CD8-positive, alpha-beta T cell (primary cell): ENCODE measurements at regions of chr3 and their contacts with region 1.

Region 1: GRCh38 chr3:105686278-105686897 is 182.4 kb downstream of the CBLB start:
- DNase-seq: peak in 2 of 9 experiments; percentile 43 to 63
- ATAC-seq: peak; percentile 66
- H3K4me3 ChIP-seq: no peak overlapping the region
- H3K4me3 Mint-ChIP-seq: no peak overlapping the region
- H3K27ac ChIP-seq: peak overlapping the region in 1 of 2 experiments; percentile 42
- H3K27ac Mint-ChIP-seq: peak overlapping the region; percentile 60
- H3K4me1 ChIP-seq: peaks cover 21% of the 10 kb centered on the region
- H3K4me1 Mint-ChIP-seq: peaks cover 28% of the 10 kb centered on the region
- H3K27me3 ChIP-seq: no peaks in the 10 kb centered on the region
- H3K27me3 Mint-ChIP-seq: no peaks in the 10 kb centered on the region
- CTCF ChIP-seq: peak; percentile 98

Region 2: DNA sequence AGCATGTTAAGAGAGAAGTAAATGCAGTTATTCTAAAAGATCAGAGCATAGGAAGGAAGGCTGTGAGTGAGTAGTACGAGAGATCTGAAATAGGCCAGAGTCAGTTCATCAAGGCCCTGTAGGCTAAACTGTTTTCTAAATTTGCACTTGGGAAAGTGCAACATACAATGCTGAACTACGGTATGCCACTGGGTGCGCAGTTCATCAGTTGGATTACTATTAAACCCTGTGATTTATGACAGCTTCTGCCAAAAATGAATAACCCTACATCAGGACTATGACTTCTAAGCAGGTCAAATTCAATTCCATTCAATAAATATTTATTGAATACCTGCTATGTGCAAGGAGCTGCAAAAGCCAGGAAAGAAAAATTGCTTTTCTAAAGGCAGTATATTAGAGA is 171.6 kb after region 1 on chr3:
- CTCF ChIA-PET with region 1: no interaction called
- POLR2A ChIA-PET with region 1: no interaction called
- intact Hi-C with region 1: no loop called
- DNase-seq: no peak
- ATAC-seq: no peak
- H3K4me3 ChIP-seq: no peak overlapping the region
- H3K4me3 Mint-ChIP-seq: peak overlapping the region; percentile 42
- H3K27ac ChIP-seq: no peak overlapping the region
- H3K27ac Mint-ChIP-seq: peak overlapping the region; percentile 7
- H3K4me1 ChIP-seq: peaks cover 54% of the 10 kb centered on the region
- H3K4me1 Mint-ChIP-seq: peaks cover 52% of the 10 kb centered on the region
- H3K27me3 ChIP-seq: no peaks in the 10 kb centered on the region
- H3K27me3 Mint-ChIP-seq: no peaks in the 10 kb centered on the region
- CTCF ChIP-seq: no peak

Region 3: DNA sequence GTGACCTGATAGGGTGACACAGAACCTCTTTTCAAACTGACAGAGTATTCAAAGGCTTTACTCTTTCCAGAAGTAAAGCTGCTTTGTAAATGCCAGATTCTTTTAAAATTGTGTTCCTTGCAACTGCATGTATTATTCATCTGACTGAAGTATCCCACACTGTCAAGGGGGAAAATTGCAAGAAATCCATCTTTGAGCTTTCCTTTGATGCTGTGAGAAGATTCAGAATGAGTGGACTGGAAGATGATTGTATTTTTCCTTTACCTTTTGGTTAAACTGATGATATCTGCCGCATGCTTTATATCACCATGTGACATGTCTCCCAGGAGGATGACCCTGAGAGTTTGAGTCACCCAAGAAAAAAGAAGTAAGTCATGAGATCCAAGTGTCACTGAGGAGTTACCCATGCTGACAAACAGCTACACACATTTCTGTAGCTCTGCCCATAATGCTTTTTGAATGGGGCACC is 433.3 kb after region 1 on chr3:
- CTCF ChIA-PET with region 1: no interaction called
- POLR2A ChIA-PET with region 1: no interaction called
- intact Hi-C with region 1: loop called in 1 of 2 experiments (anchors 5 kb)
- DNase-seq: no peak
- ATAC-seq: no peak
- H3K4me3 ChIP-seq: no peak overlapping the region
- H3K4me3 Mint-ChIP-seq: no peak overlapping the region
- H3K27ac ChIP-seq: no peak overlapping the region
- H3K27ac Mint-ChIP-seq: no peak overlapping the region
- H3K4me1 ChIP-seq: no peaks in the 10 kb centered on the region
- H3K4me1 Mint-ChIP-seq: no peaks in the 10 kb centered on the region
- H3K27me3 ChIP-seq: no peaks in the 10 kb centered on the region
- H3K27me3 Mint-ChIP-seq: no peaks in the 10 kb centered on the region
- CTCF ChIP-seq: no peak

Region 4: GRCh38 chr3:106333911-106334618 is 647.7 kb after region 1 on chr3:
- CTCF ChIA-PET with region 1: no interaction called
- POLR2A ChIA-PET with region 1: no interaction called
- intact Hi-C with region 1: loop called in 1 of 2 experiments (anchors 5 kb)
- DNase-seq: peak in 5 of 9 experiments; percentile 13 to 64 (median 42)
- ATAC-seq: peak; percentile 63
- H3K4me3 ChIP-seq: no peak overlapping the region
- H3K4me3 Mint-ChIP-seq: peak overlapping the region; percentile 50
- H3K27ac ChIP-seq: peak overlapping the region in 1 of 2 experiments; percentile 50
- H3K27ac Mint-ChIP-seq: peak overlapping the region; percentile 66
- H3K4me1 ChIP-seq: peaks cover 28% of the 10 kb centered on the region
- H3K4me1 Mint-ChIP-seq: peaks cover 47% of the 10 kb centered on the region
- H3K27me3 ChIP-seq: no peaks in the 10 kb centered on the region
- H3K27me3 Mint-ChIP-seq: no peaks in the 10 kb centered on the region
- CTCF ChIP-seq: no peak

Region 5: GRCh38 chr3:106428565-106428994 is 742.2 kb after region 1 on chr3:
- CTCF ChIA-PET with region 1: no interaction called
- POLR2A ChIA-PET with region 1: no interaction called
- intact Hi-C with region 1: loop called in 1 of 2 experiments (anchors 10 kb)
- DNase-seq: no peak
- ATAC-seq: no peak
- H3K4me3 ChIP-seq: no peak overlapping the region
- H3K4me3 Mint-ChIP-seq: no peak overlapping the region
- H3K27ac ChIP-seq: no peak overlapping the region
- H3K27ac Mint-ChIP-seq: no peak overlapping the region
- H3K4me1 ChIP-seq: no peaks in the 10 kb centered on the region
- H3K4me1 Mint-ChIP-seq: peaks cover 9% of the 10 kb centered on the region
- H3K27me3 ChIP-seq: no peaks in the 10 kb centered on the region
- H3K27me3 Mint-ChIP-seq: no peaks in the 10 kb centered on the region
- CTCF ChIP-seq: no peak

Region 6: DNA sequence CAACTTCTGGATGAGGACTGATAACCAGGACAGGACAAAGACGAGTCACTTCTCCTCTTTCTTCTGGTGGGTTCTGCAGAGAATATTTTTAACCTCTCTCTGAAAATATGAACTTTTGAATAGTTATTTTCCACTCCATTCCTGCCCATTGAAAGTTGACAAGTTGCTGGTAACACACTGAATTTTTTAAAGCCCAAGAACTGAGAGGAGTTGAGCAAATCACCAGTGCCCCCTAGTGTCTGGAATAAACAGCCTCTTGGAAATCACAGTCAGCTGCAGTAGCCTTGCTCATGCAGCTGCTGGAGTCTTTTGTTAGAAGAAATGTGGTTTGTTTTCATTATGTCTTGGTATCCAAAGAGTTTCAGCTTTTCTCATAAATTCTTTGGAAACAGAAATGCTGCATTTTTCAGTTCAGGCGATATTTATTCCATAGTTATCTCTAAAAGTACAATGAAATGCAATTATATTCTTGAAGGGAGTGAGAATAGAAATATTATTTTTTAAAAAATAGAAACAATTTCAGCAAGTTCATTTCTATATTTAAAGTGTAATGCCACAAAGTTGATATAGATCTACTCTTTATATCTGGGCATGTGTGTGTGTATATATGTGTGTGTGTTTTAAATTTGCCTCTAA is 923.4 kb after region 1 on chr3:
- CTCF ChIA-PET with region 1: interaction called, 12 read pairs
- POLR2A ChIA-PET with region 1: no interaction called
- intact Hi-C with region 1: loop called (anchors 1 kb)
- DNase-seq: peak; percentile 37 to 81 (median 56)
- ATAC-seq: peak; percentile 76
- H3K4me3 ChIP-seq: no peak overlapping the region
- H3K4me3 Mint-ChIP-seq: no peak overlapping the region
- H3K27ac ChIP-seq: no peak overlapping the region
- H3K27ac Mint-ChIP-seq: no peak overlapping the region
- H3K4me1 ChIP-seq: no peaks in the 10 kb centered on the region
- H3K4me1 Mint-ChIP-seq: peaks cover 4% of the 10 kb centered on the region
- H3K27me3 ChIP-seq: no peaks in the 10 kb centered on the region
- H3K27me3 Mint-ChIP-seq: no peaks in the 10 kb centered on the region
- CTCF ChIP-seq: peak; percentile 88